Colonic mucosa (tissue), 4 donors: ENCODE measurements at regions of chr2 and their contacts with region 1.

Region 1: DNA sequence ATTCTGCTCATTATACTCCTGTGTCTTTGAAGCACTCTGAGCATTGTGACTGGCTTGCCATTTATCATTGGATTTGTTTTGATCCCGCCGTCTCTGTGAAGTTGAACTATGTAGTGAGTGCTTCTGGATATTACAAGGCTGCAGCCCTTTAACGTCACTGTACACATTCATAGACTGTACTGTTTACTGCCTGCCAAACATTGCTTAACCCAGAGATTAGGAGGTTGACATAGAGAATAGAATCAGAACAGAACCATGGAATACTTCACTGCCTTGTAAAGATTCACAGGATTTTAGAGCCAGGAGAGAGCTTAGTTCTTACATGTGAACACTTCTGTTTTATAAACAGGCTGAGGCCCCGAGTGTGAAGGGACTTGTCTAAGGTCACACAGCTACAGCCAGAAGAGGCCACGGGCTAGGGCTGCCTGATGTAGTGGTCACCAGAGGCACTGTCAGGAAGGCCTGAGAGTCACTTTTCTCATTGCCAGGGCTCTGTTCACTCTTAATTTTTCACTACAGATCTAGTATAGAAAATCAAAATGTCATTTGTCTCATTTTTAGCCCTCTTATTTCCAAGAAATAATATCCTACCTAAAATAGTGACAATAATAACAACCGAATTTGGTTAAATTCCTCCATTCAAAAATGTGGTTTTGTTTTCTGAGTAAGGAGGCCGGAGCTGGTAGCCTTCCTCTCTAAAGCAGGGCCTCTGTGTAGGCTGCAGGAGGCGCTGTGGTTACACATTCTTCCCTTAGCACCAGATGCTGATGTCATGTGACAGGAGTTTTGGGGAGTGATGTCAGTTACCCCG is 87.9 kb downstream of the UGGT1 start:
- DNase-seq: peak; percentile 58
- H3K4me3 ChIP-seq: no peak overlapping the region
- H3K27ac ChIP-seq: no peak overlapping the region
- H3K4me1 ChIP-seq: no peaks in the 10 kb centered on the region
- H3K27me3 ChIP-seq: no peaks in the 10 kb centered on the region
- CTCF ChIP-seq: peak; percentile 75

Region 2: DNA sequence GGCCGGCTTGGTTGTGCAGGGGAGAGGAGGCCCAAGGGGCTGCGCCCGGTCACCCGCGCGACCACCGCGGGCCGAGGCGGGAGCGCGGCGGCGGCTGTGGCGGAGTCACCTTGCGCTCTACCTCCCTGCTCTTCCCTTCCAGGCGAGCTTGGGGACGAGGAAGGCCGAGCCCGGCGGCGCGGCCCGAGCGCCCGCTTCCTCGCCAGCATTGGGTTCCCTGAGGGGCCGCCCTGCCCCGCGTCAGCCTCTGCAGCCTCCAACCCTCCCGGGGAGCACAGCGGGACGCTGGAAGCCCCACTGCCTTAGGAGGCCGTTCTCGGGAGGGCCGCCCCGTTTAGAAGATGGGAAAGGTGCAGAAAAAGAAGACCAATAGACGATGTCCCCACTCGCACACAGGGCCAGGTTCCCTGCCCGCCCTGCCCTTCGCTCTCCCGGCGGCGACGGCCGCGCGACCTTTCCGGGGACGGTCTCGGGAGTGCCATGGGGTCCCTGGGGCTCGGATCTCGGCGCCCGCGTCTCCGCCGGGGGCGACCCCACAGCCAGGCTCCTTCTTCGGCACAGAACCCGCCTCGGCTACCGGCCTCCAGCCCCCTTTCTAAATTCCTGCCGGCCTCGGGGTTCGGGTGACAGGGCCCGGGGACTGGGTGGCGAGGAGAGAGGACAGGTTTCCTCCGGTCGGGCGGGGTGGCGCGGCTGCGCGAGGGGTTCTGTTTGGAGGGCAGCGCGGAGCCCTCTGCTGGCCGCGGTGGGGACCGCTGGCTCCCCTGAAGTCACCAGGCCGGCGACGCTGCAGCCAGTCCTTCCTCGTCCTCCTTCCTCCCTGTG is 54.3 kb after region 1 on chr2:
- intact Hi-C with region 1: loop called (anchors 2 kb)
- DNase-seq: peak; percentile 92
- H3K4me3 ChIP-seq: peak overlapping the region; percentile 60
- H3K27ac ChIP-seq: peak overlapping the region; percentile 70
- H3K4me1 ChIP-seq: no peaks in the 10 kb centered on the region
- H3K27me3 ChIP-seq: no peaks in the 10 kb centered on the region
- CTCF ChIP-seq: peak; percentile 93

Region 3: DNA sequence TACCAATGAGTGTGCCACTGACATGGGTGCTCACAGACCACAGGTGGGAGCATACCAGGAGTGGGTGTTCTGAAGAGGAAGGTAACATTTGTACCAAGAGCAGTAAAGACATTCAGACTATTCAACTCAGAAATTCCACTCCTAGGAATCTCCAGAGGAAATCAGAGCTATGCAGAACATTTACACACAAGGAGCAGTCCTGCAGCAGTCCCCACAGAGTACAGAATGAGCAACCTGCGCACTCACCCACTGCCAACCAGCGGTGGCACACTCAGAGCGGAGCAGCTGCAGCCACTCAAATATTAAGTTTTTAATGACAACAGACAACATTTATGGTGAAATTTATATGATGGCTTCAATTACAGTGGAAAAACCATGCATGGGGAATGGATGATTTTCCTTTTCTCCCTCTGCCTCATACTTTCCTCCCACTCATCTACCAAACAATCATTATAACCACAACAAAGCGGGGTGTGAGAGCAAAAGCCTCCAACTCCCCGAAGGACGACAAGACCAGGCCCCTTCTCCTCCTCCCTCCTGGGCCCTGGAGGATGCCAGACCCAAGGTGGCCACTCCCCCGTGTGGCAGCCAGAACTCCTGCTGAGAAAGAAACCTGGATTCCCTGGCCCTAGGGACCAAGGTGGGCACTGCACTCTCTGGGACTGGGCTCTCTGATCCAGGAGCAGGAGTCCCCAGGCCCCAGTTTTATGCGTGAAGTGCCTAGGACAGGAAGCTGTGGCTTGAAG is 134.4 kb after region 1 on chr2:
- intact Hi-C with region 1: loop called (anchors 2 kb)
- DNase-seq: peak; percentile 16
- H3K4me3 ChIP-seq: no peak overlapping the region
- H3K27ac ChIP-seq: no peak overlapping the region
- H3K4me1 ChIP-seq: peaks cover 6% of the 10 kb centered on the region
- H3K27me3 ChIP-seq: no peaks in the 10 kb centered on the region
- CTCF ChIP-seq: no peak

Region 4: DNA sequence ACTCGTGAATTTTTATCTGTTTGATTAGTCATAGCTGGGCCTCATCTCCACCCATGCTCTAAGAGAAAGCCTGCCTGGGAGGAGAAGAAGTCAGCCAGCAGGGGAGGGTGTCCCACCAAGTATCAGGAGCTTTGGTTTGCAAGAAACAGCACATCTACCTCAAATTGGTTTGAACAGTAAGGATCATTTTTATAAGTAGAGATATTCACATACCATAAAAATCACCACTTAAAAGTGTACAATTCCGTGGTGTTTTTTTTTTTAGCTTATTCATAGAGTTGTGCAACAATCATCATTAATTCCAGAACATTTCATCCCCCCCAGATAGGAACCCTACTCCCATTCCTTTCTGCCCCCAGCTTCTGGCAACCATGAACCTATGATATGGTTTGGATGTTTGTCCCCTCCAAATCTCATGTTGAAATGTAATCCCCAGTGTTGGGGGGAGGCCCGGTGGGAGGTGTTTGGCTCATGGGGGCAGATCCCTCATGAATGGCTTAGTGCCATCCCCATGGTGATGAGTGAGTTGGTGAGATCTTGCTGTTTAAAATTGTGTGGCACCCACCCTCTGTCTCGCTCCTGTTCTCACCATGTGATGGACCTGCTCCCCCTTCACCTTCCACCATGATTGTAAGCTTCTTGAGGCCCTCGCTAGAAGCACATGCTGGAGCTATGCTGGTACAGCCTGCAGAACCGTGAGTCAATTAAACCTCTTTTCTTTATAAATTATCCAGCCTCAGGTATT is 176.0 kb after region 1 on chr2:
- intact Hi-C with region 1: no loop called
- DNase-seq: no peak
- H3K4me3 ChIP-seq: no peak overlapping the region
- H3K27ac ChIP-seq: no peak overlapping the region
- H3K4me1 ChIP-seq: no peaks in the 10 kb centered on the region
- H3K27me3 ChIP-seq: no peaks in the 10 kb centered on the region
- CTCF ChIP-seq: no peak